ENCODE measurements at regions of chr5 and their contacts with region 1.

Region 1: GRCh38 chr5:134527146-134527960 is 1.9 kb downstream of the JADE2 start:
- DNase-seq: peak; percentile 63
- H3K4me3 Mint-ChIP-seq: peak overlapping the region; percentile 99
- H3K27ac Mint-ChIP-seq: peak overlapping the region; percentile 95
- H3K4me1 Mint-ChIP-seq: peaks cover 38% of the 10 kb centered on the region
- H3K27me3 Mint-ChIP-seq: peaks cover 2% of the 10 kb centered on the region

Region 2: GRCh38 chr5:134370871-134371833 is 156.2 kb before region 1 on chr5 and contains the start of gene UBE2B:
- intact Hi-C with region 1: loop called (anchors 1 kb)
- DNase-seq: peak; percentile 95
- H3K4me3 Mint-ChIP-seq: peak within 1 kb of the TSS; percentile 99
- H3K27ac Mint-ChIP-seq: peak within 1 kb of the TSS; percentile 97
- H3K4me1 Mint-ChIP-seq: peaks cover 66% of the 10 kb centered on the region
- H3K27me3 Mint-ChIP-seq: peaks cover 2% of the 10 kb centered on the region
- total RNA-seq, gene UBE2B: 98.9 and 108 TPM in 2 replicates

Region 3: GRCh38 chr5:134465816-134466240 is 61.5 kb before region 1 on chr5:
- intact Hi-C with region 1: loop called (anchors 1 kb)
- DNase-seq: peak; percentile 53
- H3K4me3 Mint-ChIP-seq: peak overlapping the region; percentile 76
- H3K27ac Mint-ChIP-seq: peak overlapping the region; percentile 68
- H3K4me1 Mint-ChIP-seq: peaks cover 17% of the 10 kb centered on the region
- H3K27me3 Mint-ChIP-seq: peaks cover 3% of the 10 kb centered on the region

Region 4: GRCh38 chr5:134493461-134494055 is 33.8 kb before region 1 on chr5:
- intact Hi-C with region 1: no loop called
- DNase-seq: no peak
- H3K4me3 Mint-ChIP-seq: no peak overlapping the region
- H3K27ac Mint-ChIP-seq: no peak overlapping the region
- H3K4me1 Mint-ChIP-seq: peaks cover 10% of the 10 kb centered on the region
- H3K27me3 Mint-ChIP-seq: no peaks in the 10 kb centered on the region

Region 5: GRCh38 chr5:134543820-134544614 is 16.7 kb after region 1 on chr5:
- intact Hi-C with region 1: loop called (anchors 1 kb)
- DNase-seq: peak; percentile 30
- H3K4me3 Mint-ChIP-seq: peak overlapping the region; percentile 83
- H3K27ac Mint-ChIP-seq: peak overlapping the region; percentile 94
- H3K4me1 Mint-ChIP-seq: peaks cover 46% of the 10 kb centered on the region
- H3K27me3 Mint-ChIP-seq: no peaks in the 10 kb centered on the region

Region 6: GRCh38 chr5:134586866-134587524 is 59.6 kb after region 1 on chr5:
- intact Hi-C with region 1: loop called (anchors 2 kb)
- DNase-seq: peak; percentile 72
- H3K4me3 Mint-ChIP-seq: no peak overlapping the region
- H3K27ac Mint-ChIP-seq: peak overlapping the region; percentile 52
- H3K4me1 Mint-ChIP-seq: peaks cover 14% of the 10 kb centered on the region
- H3K27me3 Mint-ChIP-seq: no peaks in the 10 kb centered on the region

Region 7: GRCh38 chr5:134758504-134759341 is 231.4 kb after region 1 on chr5 and contains the start of gene DDX46:
- intact Hi-C with region 1: loop called (anchors 5 kb)
- DNase-seq: peak; percentile 94
- H3K4me3 Mint-ChIP-seq: peak within 1 kb of the TSS; percentile 100
- H3K27ac Mint-ChIP-seq: peak within 1 kb of the TSS; percentile 99
- H3K4me1 Mint-ChIP-seq: peaks cover 28% of the 10 kb centered on the region
- H3K27me3 Mint-ChIP-seq: no peaks in the 10 kb centered on the region
- total RNA-seq, gene DDX46: 78.3 and 84.4 TPM in 2 replicates